H1 (cell line): ENCODE measurements at regions of chr21 and their contacts with region 1.

Region 1: DNA sequence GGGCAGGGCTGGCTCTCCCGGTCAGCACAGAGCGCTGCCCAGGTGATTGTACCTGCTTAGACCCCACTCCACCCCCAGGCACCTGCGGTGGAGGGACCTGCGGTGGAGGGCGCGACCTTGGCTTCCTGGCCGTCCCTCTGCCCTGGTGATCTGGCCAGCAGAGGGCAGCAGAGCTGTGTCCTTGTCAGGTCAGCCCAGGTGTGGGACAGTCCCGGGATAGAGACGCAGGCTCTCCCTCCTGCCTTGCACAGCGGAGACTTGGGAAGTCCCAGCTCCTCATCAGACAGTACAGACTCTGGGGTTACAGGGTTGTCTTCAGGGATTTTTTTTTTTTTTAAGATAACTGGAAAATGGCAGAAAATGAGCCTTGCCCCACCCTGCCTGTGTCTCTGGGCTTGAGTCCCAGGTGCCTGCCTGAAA is 10.0 kb downstream of the SLX9 start:
- DNase-seq: peak; percentile 53 to 98
- H3K4me3 ChIP-seq: no peak overlapping the region
- H3K27ac ChIP-seq: no peak overlapping the region
- H3K4me1 ChIP-seq: no peaks in the 10 kb centered on the region; a peak in 1 of 7 replicates
- H3K27me3 ChIP-seq: no peaks in the 10 kb centered on the region
- CTCF ChIP-seq: peak in 2 of 3 experiments; percentile 93 to 98; a peak in 3 of 4 replicates
- EP300 ChIP-seq: no peak
- POLR2A ChIP-seq: no peak
- RAD21 ChIP-seq: peak; percentile 89 to 90

Region 2: DNA sequence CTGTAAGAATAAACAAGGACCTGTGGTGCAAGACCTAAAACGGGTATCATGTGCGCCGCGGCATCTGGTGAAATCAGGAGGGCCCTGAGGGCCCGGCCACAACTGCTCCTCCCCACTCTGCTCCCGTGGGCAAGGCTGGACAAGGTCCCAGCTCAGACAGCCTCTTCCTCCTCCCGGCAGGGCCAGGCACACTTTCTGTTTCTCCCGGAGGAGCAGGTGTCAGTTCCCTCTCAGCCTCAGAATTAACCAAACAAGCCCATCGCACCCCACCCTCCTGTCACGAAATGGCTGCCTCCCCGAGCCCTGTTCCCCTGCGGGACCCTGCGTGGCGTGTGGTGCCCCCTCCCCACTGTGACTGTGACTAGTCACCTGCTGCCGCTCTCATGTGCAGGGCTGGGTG is 91.5 kb before region 1 on chr21:
- CTCF ChIA-PET with region 1: no interaction called
- POLR2A ChIA-PET with region 1: no interaction called
- DNase-seq: no peak
- H3K4me3 ChIP-seq: no peak overlapping the region
- H3K27ac ChIP-seq: no peak overlapping the region
- H3K4me1 ChIP-seq: peaks cover 0 to 3% (median under 1%) of the 10 kb centered on the region in 4 experiments; a peak in 2 of 7 replicates
- H3K27me3 ChIP-seq: no peaks in the 10 kb centered on the region
- CTCF ChIP-seq: no peak
- EP300 ChIP-seq: no peak
- POLR2A ChIP-seq: no peak
- RAD21 ChIP-seq: no peak

Region 3: DNA sequence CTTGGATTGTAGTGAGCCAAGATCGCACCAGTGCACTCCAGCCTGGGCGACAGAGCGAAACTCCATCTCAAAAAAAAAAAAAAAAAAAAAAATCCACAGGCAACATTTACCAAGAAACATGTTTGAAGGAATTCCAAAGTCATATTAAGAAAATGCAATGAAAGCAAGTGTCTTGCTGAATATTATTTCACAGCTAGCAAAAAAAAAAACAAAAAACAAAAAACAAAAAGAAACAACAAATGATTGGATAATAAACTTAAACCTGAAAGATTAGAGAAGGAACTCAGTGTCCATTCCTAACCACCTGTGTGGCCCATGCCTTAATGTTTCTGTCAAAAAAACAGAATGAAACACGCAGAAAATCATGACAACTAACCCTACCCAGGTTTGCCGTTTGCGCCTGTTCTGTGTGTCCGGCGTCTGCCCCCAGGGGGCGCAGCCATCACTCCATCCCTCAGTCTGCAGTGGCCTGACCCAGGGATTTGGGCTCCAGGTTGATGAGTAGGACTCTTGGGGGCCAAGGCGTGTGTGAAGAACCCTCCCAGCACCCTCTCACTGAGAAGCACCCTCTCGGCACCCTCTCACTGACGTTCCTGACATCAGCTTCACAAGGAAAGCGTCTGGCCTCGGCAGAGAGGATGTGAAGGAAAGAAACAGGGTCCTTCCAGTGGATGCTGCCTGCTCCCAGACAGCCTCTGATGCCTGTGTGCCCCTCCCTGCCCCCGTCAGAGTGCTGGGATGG is 57.1 kb before region 1 on chr21:
- CTCF ChIA-PET with region 1: interaction called, 10 read pairs
- POLR2A ChIA-PET with region 1: no interaction called
- DNase-seq: peak in 1 of 2 experiments; percentile 93
- H3K4me3 ChIP-seq: no peak overlapping the region
- H3K27ac ChIP-seq: no peak overlapping the region
- H3K4me1 ChIP-seq: 0 out of 7 replicates have a peak, but pooled peaks cover 0 to 4% (median 0%) of the 10 kb centered on the region in 4 experiments
- H3K27me3 ChIP-seq: no peaks in the 10 kb centered on the region; a peak in 1 of 7 replicates
- CTCF ChIP-seq: peak in 2 of 3 experiments; percentile 82 to 94; a peak in 3 of 4 replicates
- EP300 ChIP-seq: no peak
- POLR2A ChIP-seq: no peak
- RAD21 ChIP-seq: peak; percentile 63 to 72

Region 4: GRCh38 chr21:44939532-44940115 is 10.2 kb before region 1 on chr21 and contains the start of gene SLX9:
- CTCF ChIA-PET with region 1: interaction called, 10 read pairs
- POLR2A ChIA-PET with region 1: interaction called, 11 read pairs
- DNase-seq: peak in 1 of 2 experiments; percentile 89
- H3K4me3 ChIP-seq: peak within 1 kb of the TSS; percentile 78 to 98 (median 88)
- H3K27ac ChIP-seq: peak within 1 kb of the TSS; percentile 61; the same call in 1 of the 2 replicates
- H3K4me1 ChIP-seq: peaks cover 0 to 6% (median 3%) of the 10 kb centered on the region in 4 experiments; a peak in 4 of 7 replicates
- H3K27me3 ChIP-seq: peaks cover 0 to 3% (median 1%) of the 10 kb centered on the region in 4 experiments; a peak in 4 of 7 replicates
- CTCF ChIP-seq: no peak
- EP300 ChIP-seq: peak in 1 of 2 experiments; percentile 80; a peak in 1 of 3 replicates
- POLR2A ChIP-seq: peak in 1 of 2 experiments; percentile 78; a peak in 2 of 3 replicates
- RAD21 ChIP-seq: no peak; a peak in 1 of 4 replicates
- total RNA-seq, gene SLX9: 57.3 and 64.1 TPM in 2 replicates

Region 5: GRCh38 chr21:44972821-44973220 is 23.0 kb after region 1 on chr21:
- CTCF ChIA-PET with region 1: interaction called, 25 read pairs
- POLR2A ChIA-PET with region 1: interaction called, 3 read pairs
- DNase-seq: no peak
- H3K4me3 ChIP-seq: no peak overlapping the region
- H3K27ac ChIP-seq: no peak overlapping the region
- H3K4me1 ChIP-seq: no peaks in the 10 kb centered on the region; a peak in 1 of 7 replicates
- H3K27me3 ChIP-seq: no peaks in the 10 kb centered on the region
- CTCF ChIP-seq: no peak
- EP300 ChIP-seq: no peak
- POLR2A ChIP-seq: no peak
- RAD21 ChIP-seq: no peak

Region 6: DNA sequence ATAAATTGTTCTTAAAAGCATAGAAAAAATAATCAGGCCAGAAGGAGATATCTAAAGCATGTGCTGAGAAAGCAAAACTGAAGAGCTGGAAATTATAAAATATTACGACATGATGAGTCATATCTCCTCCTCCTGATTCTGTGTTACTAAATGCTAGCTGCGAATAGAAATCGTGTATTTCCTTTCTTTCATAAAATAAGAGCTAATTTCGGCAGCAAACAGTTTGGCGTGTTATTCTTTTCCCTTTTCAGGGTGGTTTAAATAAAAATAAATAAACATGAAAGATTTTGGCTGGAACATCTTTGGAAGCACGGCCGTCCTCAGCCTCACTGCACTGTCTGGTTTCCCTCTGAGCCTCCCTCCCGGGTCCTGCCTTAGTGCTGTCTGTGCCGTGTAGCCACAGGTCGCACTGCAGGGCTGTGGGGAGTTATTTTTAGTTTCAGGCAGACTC is 180.6 kb after region 1 on chr21:
- CTCF ChIA-PET with region 1: interaction called, 101 read pairs
- POLR2A ChIA-PET with region 1: no interaction called
- DNase-seq: no peak
- H3K4me3 ChIP-seq: no peak overlapping the region
- H3K27ac ChIP-seq: no peak overlapping the region
- H3K4me1 ChIP-seq: no peaks in the 10 kb centered on the region
- H3K27me3 ChIP-seq: no peaks in the 10 kb centered on the region
- CTCF ChIP-seq: no peak
- EP300 ChIP-seq: no peak
- POLR2A ChIP-seq: no peak
- RAD21 ChIP-seq: no peak